ENCODE measurements at regions of chr16 and their contacts with region 1.

Region 1: GRCh38 chr16:84694980-84695379 is 4.8 kb upstream of the USP10 start:
- DNase-seq: no peak
- H3K27ac ChIP-seq: no peak overlapping the region
- CTCF ChIP-seq: no peak

Region 2: DNA sequence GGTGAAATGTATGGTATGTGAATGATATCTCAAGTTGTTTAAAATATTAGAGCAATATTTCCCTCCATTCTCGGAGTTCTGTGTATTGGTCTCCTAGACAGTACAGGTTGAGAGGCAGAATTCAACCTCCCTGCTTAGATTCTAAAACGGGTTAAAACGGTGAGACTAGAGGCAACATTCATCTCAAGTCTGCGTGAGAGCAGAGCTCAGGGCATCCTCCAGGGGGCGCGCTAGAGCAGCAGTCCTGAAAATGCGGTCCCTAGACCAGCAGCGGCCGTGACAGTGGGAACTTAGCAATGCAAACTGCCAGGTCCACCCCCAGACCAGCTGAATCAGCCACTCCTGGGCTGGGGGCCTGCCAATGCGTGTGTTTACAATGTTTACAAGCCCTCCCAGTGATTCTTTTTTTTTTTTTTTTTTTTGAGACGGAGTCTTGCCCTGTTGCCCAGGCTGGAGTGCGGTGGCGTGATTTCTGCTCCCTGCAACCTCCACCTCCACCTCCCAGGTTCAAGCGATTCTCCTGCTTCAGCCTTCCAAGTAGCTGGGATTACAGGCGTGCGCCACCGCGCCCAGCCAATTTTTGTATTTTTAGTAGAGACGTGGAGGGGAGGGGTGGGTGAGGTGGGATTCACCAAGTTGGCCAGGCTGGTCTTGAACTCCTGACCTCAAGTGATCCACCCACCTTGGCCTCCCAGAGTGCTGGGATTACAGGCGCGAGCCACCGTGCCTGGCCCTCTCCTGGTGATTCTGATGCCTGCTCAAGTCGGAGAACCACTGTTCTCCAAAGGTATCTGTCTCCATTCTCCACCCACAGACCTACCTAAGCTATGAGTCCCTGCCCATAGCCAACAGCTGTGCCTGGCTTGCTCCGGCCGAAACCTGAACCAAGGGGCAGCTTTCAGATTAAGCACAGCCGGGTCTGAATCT is 22.4 kb before region 1 on chr16:
- CTCF ChIA-PET with region 1: interaction called, 10 read pairs
- POLR2A ChIA-PET with region 1: no interaction called
- DNase-seq: peak; percentile 64
- H3K27ac ChIP-seq: peak overlapping the region; percentile 32
- CTCF ChIP-seq: peak; percentile 85

Region 3: DNA sequence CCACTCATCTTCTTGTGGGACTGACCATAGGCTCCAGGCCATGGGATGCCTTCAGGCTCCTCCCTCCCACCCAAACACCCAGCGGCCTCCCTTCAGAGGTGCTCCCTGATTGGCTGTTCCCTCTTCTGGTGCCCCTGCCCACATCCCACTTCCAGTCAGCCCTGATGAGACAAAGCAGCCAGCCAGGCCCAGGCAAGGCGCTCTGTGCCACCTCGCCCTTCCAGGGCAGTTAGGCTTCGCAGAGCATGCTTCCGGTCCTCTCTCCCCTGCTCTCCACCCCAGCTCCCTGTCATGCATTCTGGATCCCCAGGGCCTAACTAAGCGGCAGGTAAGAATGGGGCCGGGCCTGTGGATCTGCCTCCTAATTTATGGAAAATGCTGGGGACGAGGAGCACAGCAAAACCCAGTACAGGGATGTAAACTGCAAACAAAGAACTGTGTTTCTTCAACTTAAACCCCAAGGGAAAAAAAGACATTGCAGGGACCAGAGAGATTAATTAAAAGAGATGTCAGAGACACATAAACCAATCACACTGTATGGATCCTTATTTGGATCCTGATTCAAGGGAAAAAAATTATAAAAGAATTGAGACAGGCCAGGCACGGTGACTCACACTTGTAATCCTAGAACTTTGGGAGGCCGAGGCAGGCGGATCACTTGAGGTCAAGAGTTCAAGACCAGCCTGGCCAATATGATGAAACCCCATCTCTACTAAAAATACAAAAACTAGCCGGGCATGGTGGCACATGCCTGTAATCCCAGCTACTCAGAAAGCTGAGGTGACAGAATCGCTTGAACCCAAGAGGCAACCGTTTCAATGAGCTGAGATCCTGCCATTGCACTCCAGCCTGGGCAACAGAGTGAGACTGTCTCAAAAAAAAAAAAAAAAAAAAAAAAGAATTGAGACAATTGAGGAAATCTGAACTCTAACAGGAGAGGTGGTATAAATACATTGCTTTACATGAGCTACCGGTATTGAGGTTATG is 290.4 kb after region 1 on chr16:
- CTCF ChIA-PET with region 1: no interaction called
- POLR2A ChIA-PET with region 1: no interaction called
- DNase-seq: peak; percentile 77
- H3K27ac ChIP-seq: peak overlapping the region; percentile 85
- CTCF ChIP-seq: no peak

Measured in RWPE1 (cell line).